Activated B cell treated with CpG ODN at 0.5 μM for 24 hours (primary cell): ENCODE measurements at regions of chr9 and their contacts with region 1.

Region 1: DNA sequence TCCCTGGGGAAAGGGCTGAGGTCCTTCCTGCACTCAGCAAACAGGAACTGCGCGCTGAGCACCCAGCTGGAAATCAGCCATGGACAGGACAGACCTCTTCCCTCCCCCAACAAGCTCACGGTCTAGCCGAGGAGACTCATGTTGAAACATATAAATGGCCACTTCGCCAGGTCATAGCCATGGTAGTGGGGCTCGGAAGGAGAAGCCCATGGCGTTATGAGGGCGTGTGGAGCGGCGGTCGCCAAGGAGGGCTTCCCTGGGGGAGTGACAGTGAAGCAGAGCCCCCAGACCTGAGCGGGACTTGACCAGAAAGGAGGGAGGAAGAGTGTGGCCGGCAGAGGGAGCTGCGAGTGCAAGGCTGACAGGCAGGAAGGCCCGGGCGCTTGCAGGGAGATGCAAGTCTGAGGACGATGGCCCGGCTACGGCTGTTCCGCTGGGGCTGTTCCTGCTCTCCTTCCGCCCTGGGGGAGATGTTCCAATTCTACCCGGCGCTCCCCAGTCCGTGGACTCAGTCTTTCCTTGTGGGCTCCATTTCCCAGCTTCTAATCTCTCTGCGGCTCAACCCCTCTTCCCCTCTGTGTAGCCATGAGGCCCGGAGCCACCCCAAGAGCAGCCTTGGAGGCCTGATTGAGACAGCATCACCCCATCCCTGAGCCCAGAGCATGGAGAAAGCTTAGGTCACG is 43.9 kb upstream of the PRRC2B start:
- DNase-seq: peak; percentile 79
- ATAC-seq: peak; percentile 97
- H3K4me3 Mint-ChIP-seq: peak overlapping the region; percentile 29
- H3K27ac Mint-ChIP-seq: no peak overlapping the region
- H3K4me1 Mint-ChIP-seq: peaks cover 6% of the 10 kb centered on the region
- H3K27me3 Mint-ChIP-seq: peaks cover 2% of the 10 kb centered on the region
- CTCF ChIP-seq: no peak

Region 2: GRCh38 chr9:131441441-131441840 is 91.4 kb after region 1 on chr9:
- CTCF ChIA-PET with region 1: interaction called, 5 read pairs
- POLR2A ChIA-PET with region 1: no interaction called
- intact Hi-C with region 1: loop called (anchors 1 kb)
- DNase-seq: peak; percentile 37
- ATAC-seq: peak; percentile 99
- H3K4me3 Mint-ChIP-seq: peak overlapping the region; percentile 46
- H3K27ac Mint-ChIP-seq: peak overlapping the region; percentile 86
- H3K4me1 Mint-ChIP-seq: peaks cover 31% of the 10 kb centered on the region
- H3K27me3 Mint-ChIP-seq: no peaks in the 10 kb centered on the region
- CTCF ChIP-seq: no peak

Region 3: GRCh38 chr9:131478421-131478868 is 128.4 kb after region 1 on chr9:
- CTCF ChIA-PET with region 1: interaction called, 25 read pairs
- POLR2A ChIA-PET with region 1: no interaction called
- intact Hi-C with region 1: loop called (anchors 1 kb)
- DNase-seq: peak; percentile 56
- ATAC-seq: peak; percentile 57
- H3K4me3 Mint-ChIP-seq: no peak overlapping the region
- H3K27ac Mint-ChIP-seq: peak overlapping the region; percentile 18
- H3K4me1 Mint-ChIP-seq: no peaks in the 10 kb centered on the region
- H3K27me3 Mint-ChIP-seq: no peaks in the 10 kb centered on the region
- CTCF ChIP-seq: no peak

Region 4: DNA sequence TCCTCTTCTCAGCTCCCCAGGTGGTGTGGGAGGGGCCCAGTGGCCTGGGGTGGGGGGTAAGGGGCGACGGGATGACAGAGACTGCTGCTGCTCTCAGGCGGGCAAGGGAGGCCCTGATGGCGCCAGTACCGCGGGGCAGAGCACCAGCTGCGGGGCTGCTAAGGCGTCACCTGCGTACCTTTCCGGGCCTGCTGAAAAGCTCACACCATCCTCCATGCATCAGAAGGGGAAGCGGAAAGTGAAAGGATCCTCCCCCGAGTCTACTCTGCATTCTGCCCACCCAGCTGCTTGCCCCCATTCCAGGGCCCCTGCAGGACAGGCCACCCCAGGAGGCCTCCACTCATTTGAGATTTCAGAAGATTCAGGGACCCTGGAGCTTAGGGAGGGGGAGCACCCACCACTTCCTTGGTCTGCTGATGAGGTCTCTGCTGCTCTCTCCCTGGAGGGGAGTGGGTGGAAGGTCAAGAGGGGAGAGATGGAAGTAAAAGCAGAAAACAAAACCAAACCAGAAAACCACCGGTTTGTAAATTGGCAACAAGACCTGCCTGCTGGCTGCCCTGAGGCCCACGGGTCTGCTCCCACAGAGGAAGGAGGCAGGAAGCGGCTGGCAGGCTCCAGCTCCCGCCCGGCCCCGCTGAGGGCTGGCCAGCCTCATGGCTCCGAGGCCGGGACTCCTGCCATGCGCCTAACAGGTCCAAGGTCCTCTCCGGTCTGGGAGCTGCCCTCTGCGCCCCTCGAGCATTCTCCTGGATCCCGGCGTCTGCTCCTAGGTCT is 228.9 kb after region 1 on chr9:
- CTCF ChIA-PET with region 1: no interaction called
- POLR2A ChIA-PET with region 1: no interaction called
- intact Hi-C with region 1: loop called (anchors 2 kb)
- DNase-seq: no peak
- ATAC-seq: peak; percentile 86
- H3K4me3 Mint-ChIP-seq: peak overlapping the region; percentile 53
- H3K27ac Mint-ChIP-seq: peak overlapping the region; percentile 91
- H3K4me1 Mint-ChIP-seq: peaks cover 27% of the 10 kb centered on the region
- H3K27me3 Mint-ChIP-seq: no peaks in the 10 kb centered on the region
- CTCF ChIP-seq: no peak

Region 5: DNA sequence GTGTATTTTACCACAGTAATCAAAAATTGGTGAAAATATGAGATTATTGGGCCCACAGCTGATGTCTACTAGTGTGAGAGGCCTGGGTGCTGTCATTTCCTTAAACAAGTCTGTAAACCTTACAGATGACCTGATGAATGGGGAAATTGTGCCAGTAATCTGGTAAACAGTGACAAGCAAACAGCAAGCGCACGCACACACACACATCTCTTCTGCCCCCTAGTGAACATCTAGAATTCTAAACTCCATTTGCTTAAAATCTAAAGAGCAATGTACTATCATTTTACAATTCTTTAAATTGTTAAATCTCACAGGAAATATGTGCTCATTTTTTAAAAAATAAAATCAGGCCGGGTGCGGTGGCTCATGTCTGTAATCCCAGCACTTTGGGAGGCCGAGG is 397.3 kb after region 1 on chr9:
- CTCF ChIA-PET with region 1: interaction called, 7 read pairs
- POLR2A ChIA-PET with region 1: interaction called, 3 read pairs
- intact Hi-C with region 1: loop called (anchors 1 kb)
- DNase-seq: no peak
- ATAC-seq: peak; percentile 55
- H3K4me3 Mint-ChIP-seq: no peak overlapping the region
- H3K27ac Mint-ChIP-seq: no peak overlapping the region
- H3K4me1 Mint-ChIP-seq: peaks cover 27% of the 10 kb centered on the region
- H3K27me3 Mint-ChIP-seq: no peaks in the 10 kb centered on the region
- CTCF ChIP-seq: no peak

Region 6: DNA sequence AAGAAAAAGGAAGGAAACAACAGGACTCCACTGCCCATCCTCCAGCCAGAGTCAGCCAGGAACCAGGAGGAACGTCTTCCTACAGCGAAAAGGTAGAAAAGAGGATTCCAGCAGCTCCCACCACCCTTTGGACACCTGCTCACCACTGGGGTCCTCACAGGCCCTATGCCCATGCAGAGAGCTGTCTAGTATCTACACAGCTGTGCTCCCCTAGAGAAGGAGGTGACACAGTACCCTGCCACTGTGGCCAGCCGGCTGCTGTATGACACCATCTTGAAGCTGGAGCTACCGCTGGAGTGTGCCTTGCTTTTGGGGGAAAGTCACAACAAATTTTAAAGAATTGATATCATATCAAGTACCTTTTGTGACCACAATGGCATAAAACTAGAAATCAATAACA is 1412.9 kb after region 1 on chr9:
- CTCF ChIA-PET with region 1: no interaction called
- POLR2A ChIA-PET with region 1: interaction called, 11 read pairs
- intact Hi-C with region 1: no loop called
- DNase-seq: no peak
- ATAC-seq: no peak
- H3K4me3 Mint-ChIP-seq: no peak overlapping the region
- H3K27ac Mint-ChIP-seq: no peak overlapping the region
- H3K4me1 Mint-ChIP-seq: no peaks in the 10 kb centered on the region
- H3K27me3 Mint-ChIP-seq: no peaks in the 10 kb centered on the region
- CTCF ChIP-seq: no peak